ENCODE measurements at regions of chr3 and their contacts with region 1.

Region 1: GRCh38 chr3:169218314-169218983 is 445.1 kb downstream of the MECOM start:
- DNase-seq: peak; percentile 46
- H3K4me3 ChIP-seq: no peak overlapping the region
- H3K27ac ChIP-seq: peak overlapping the region in 3 of 4 donors; percentile 18 to 36 (median 31)
- H3K4me1 ChIP-seq: peaks cover 0 to 7% (median 2%) of the 10 kb centered on the region in 4 donors
- H3K27me3 ChIP-seq: no peaks in the 10 kb centered on the region
- CTCF ChIP-seq: peak; percentile 41 to 66 (median 53)
- EP300 ChIP-seq: no peak
- POLR2A ChIP-seq: no peak

Region 2: GRCh38 chr3:168398371-168399025 is 820.0 kb before region 1 on chr3:
- in situ Hi-C with region 1: no loop called
- intact Hi-C with region 1: loop called (anchors 10 kb)
- DNase-seq: no peak
- H3K4me3 ChIP-seq: no peak overlapping the region
- H3K27ac ChIP-seq: no peak overlapping the region
- H3K4me1 ChIP-seq: no peaks in the 10 kb centered on the region
- H3K27me3 ChIP-seq: no peaks in the 10 kb centered on the region
- CTCF ChIP-seq: no peak
- EP300 ChIP-seq: no peak
- POLR2A ChIP-seq: no peak

Measured in transverse colon (tissue), 4 donors.